PC-3 (cell line): ENCODE measurements at regions of chr3 and their contacts with region 1.

Region 1: GRCh38 chr3:63980835-63981498 is 42.3 kb downstream of the PSMD6 start:
- DNase-seq: no peak
- ATAC-seq: no peak
- H3K4me3 ChIP-seq: no peak overlapping the region
- H3K27ac ChIP-seq: no peak overlapping the region
- H3K4me1 ChIP-seq: peaks cover 9% of the 10 kb centered on the region
- H3K27me3 ChIP-seq: no peaks in the 10 kb centered on the region
- CTCF ChIP-seq: no peak

Region 2: DNA sequence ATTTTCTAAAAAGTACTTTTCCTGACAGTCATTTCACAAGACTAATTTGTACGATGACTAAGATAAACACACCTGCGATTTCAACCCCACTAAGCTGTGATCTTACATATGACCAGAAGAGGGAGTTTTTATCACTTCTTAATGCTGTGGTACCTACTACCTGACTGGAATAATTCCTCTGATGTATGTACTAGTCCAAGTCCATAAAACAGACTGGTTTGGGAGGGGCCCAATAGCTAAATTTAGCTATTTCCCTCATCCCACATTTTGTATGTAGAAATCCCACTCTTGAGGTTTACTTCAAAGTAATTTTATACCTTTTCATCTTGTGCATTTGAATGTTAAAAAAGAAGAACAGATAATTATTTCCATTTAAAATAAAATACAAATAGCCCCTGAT is 19.1 kb before region 1 on chr3:
- CTCF ChIA-PET with region 1: interaction called, 13 read pairs
- POLR2A ChIA-PET with region 1: no interaction called
- intact Hi-C with region 1: no loop called
- DNase-seq: peak; percentile 54
- ATAC-seq: peak; percentile 63
- H3K4me3 ChIP-seq: no peak overlapping the region
- H3K27ac ChIP-seq: no peak overlapping the region
- H3K4me1 ChIP-seq: peaks cover 4% of the 10 kb centered on the region; the same call in 1 of the 2 replicates
- H3K27me3 ChIP-seq: no peaks in the 10 kb centered on the region
- CTCF ChIP-seq: peak; percentile 48; the same call in 1 of the 2 replicates